Tibial artery (tissue), 4 donors: ENCODE measurements at regions of chr17 and their contacts with region 1.

Region 1: DNA sequence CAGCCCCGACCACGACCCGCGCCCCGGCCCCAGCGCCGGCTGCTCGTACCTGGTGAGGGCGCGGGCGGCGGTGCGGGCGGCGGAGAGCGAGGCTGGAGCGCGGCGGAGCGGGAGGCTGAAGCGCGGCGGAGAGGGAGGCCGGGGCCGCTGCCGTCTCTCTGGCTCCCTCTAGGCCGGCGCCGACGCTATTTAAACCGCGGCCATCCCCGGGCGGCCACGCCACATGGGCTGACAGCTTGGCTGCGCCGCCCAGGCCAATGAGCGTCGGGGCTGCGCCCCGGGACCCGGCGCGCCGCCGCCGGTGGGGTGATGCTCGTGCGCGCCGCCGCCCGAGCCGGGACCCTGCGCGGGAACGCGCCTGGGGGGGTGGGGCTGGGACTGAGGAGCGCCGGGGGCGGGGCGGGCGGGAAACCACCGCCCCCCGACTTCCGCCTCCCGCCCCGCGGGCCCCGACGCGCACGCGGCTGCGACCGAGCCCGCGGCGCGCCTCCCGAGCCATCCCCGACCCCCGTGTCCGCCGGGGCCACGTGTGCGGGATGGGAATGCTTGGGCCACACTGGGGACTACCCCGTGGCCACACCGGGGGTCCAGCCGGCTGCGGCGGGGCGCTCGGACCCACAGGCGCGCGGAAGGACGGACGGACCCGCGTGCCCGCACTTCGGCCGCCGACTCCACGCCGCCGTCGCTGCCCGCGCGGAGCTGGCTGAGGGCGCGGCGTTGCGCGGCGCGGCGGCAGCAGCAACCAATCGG is at the start of gene FASN:
- DNase-seq: peak; percentile 93 to 96
- H3K4me3 ChIP-seq: peak within 1 kb of the TSS; percentile 65 to 84
- H3K27ac ChIP-seq: peak within 1 kb of the TSS; percentile 87 to 98
- H3K4me1 ChIP-seq: peaks cover 0 to 55% (median 29%) of the 10 kb centered on the region in 4 donors
- H3K27me3 ChIP-seq: no peaks in the 10 kb centered on the region
- CTCF ChIP-seq: peak; percentile 40 to 46

Region 2: DNA sequence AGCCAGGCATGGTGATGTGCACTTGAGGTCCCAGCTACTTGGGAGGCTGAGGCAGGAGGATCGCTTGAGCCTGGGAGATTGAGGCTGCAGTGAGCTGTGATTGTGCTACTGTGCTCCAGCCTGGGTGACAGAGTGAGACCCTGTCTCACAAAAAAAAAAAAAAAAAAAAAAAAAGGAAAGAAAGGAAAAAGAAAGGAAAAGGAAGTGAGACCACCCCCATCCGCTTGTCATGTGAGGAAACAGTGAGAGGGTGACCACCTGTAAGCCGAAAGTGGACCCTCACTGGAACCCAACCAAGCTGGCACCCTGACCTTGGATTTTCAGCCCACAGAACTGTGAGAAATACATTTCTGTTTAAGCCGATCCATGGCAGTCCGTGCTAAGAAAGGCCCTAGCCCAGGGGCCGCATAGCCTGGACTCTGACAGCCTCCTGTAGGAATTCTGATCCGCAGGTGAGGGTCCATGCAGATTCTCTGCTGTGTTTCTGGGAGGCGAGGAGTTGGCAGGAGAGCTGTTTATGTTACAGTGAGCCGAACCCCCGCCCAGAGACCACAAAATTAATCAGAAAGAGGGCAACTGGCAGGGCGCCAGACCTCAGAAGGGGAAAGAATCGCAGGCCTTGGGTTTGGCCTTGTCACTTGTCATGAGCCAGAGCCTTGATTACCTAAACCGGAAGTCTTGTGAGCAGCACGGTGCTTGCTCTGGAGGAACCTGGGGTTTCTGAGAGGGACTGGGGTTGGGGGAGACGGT is 1879.1 kb before region 1 on chr17:
- intact Hi-C with region 1: loop called (anchors 5 kb)
- DNase-seq: peak; percentile 82 to 87
- H3K4me3 ChIP-seq: peak overlapping the region; percentile 81 to 93
- H3K27ac ChIP-seq: peak overlapping the region; percentile 78 to 82
- H3K4me1 ChIP-seq: peaks cover 0 to 29% (median 21%) of the 10 kb centered on the region in 4 donors
- H3K27me3 ChIP-seq: no peaks in the 10 kb centered on the region
- CTCF ChIP-seq: no peak

Region 3: DNA sequence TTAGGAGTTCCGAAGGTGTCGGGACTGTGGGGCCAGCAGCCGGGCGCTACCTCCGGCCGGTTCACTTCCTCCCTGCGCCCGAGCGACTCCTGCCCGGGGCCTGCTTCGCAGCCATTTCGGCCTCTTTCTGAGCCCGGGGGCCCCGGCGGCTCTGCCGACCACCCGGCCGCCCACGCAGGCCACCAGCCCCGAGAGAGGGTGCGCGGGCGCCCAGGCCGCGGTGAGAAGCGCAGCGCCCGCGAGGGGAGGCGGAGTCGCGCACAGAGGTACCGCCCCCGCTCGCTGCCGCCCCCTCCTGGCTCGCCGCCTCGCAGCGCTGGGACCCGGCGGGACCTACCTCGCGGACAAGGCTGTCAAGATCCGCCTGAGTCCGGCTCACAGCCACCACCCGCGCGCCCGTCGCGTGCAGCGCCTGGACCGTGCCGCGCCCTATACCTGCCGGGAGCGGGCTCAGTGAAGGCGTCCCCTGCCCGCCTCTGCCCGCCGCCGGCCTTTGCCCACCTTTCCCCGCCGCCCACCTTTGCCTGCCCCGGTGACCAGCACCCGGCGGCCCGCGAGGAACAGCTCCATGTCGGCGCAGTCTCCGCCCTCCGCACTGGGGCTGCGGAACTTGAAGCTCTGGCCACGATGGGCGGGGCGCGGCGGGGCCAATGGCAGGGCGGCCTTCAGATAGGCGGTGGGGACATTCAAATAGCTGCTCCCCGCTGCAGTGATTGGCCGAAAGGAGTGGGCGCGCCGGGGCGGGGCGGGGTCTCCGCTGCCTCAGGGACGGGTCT is 60.9 kb before region 1 on chr17 and contains the start of gene DCXR:
- intact Hi-C with region 1: loop called (anchors 5 kb)
- DNase-seq: peak; percentile 99
- H3K4me3 ChIP-seq: peak within 1 kb of the TSS; percentile 64 to 97
- H3K27ac ChIP-seq: peak within 1 kb of the TSS; percentile 96 to 99
- H3K4me1 ChIP-seq: peaks cover 0 to 23% (median 16%) of the 10 kb centered on the region in 4 donors
- H3K27me3 ChIP-seq: peaks cover 0 to 14% of the 10 kb centered on the region in 2 donors
- CTCF ChIP-seq: peak; percentile 69 to 70